ENCODE measurements at regions of chr18 and their contacts with region 1.

Region 1: DNA sequence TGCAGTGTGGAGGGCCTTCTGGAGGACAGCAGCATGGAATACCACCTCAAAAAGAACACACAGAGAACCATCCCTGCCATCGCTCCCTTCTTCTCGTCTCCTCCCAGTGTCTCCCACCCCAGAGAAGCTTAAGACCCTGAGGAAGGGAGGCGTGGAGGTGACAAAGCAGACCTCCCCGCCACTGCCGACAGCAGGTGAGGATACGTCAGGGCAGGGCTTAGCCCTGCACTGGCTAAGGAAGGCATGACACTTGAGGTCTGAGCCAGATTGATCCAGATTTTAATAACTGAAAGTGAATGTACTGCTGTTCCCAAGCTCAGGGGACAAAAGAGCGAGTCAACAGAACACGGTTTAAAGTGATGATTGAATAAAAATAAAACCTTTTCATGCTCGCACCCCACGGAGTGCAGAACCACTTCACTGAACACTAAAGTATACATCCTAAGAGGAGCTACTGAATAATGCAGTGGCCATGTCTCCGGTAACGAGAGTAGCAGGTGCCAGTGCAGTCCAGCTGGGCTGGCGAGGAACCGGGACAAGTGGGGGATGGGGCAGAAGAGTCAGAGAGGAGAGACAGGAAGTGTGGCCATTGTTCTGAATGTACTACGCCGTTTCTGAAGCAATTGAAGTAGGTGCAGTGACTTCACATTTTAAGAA is 391.0 kb downstream of the CDH2 start:
- DNase-seq: no peak
- H3K4me3 ChIP-seq: no peak overlapping the region
- H3K27ac ChIP-seq: no peak overlapping the region
- H3K4me1 ChIP-seq: peaks cover 6% of the 10 kb centered on the region
- H3K27me3 ChIP-seq: no peaks in the 10 kb centered on the region
- CTCF ChIP-seq: no peak

Region 2: DNA sequence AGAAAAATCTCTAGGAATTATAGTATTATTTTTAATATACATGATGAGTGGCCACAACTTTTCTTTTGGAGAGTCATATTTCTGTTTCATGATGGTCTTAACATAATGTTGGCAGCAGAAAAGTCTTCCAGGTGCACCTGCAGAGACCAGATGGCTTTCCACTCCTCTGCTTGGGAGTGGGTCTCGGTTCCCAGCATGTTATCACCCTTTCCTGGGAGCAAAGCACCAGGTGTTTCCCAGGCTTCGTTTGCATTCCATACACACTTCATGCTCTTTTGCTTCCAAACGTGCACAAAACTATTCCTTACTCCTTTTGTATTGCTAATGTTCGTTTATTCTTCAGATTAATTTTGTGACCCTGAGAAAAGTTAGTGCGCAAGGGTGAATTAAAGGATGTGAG is 85.8 kb after region 1 on chr18:
- CTCF ChIA-PET with region 1: no interaction called
- dilution Hi-C with region 1: no loop called
- in situ Hi-C with region 1: no loop called
- intact Hi-C with region 1: loop called (anchors 10 kb)
- DNase-seq: no peak
- H3K4me3 ChIP-seq: no peak overlapping the region
- H3K27ac ChIP-seq: no peak overlapping the region
- H3K4me1 ChIP-seq: no peaks in the 10 kb centered on the region
- H3K27me3 ChIP-seq: no peaks in the 10 kb centered on the region
- CTCF ChIP-seq: no peak